ENCODE measurements at regions of chr1 and their contacts with region 1.

Region 1: GRCh38 chr1:36223993-36224536 is at the start of gene THRAP3:
- DNase-seq: peak; percentile 100
- total RNA-seq, gene THRAP3: 86.5 TPM

Region 2: DNA sequence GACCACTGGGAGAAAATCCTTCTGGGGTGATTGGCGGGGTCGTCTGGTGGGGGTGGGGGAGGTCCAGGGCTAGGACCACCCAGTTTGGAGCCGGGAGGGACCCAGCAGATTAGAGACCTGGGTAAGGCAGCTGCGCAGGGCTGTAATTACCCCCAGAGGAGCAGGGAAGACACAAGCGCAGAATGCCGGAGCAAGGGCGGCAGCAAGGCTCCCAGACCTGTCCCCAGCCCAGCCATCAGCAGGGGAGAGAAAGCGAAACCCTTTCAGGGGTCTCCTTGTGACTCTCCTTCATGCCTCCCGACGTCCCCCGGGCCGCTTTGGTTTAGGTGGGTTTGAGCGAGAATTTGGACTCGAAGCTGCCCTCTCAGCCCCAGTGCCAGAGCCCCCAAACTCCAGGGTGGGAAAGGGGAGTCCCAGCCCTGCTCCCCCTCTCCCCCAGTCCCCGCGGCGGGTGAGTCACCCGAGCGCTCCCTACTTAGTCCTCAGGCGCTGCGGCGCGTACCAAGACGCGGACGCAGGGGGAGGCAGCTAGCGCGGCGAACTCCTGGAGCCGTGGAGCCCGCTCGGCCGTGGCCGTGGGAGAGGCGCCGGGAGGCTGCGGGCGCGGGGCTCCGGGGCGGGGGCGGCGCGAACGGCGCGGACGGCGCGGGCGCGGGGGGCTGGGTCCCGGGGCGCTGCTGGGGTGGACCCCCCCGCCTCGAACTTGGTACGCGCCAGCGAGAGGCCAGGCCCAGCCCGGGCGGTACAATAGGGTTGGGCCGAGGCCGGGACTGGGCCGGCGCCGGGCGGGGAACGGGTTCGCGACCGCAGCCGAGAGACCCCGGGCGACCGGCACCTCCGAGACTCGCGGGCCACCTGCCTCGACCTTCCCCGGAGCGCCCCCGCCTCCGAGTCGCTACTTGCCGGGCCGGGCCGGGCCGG is 68.4 kb before region 1 on chr1 and contains the start of gene MAP7D1:
- intact Hi-C with region 1: loop called (anchors 2 kb)
- DNase-seq: peak; percentile 96
- total RNA-seq, gene MAP7D1: 262 TPM

Region 3: DNA sequence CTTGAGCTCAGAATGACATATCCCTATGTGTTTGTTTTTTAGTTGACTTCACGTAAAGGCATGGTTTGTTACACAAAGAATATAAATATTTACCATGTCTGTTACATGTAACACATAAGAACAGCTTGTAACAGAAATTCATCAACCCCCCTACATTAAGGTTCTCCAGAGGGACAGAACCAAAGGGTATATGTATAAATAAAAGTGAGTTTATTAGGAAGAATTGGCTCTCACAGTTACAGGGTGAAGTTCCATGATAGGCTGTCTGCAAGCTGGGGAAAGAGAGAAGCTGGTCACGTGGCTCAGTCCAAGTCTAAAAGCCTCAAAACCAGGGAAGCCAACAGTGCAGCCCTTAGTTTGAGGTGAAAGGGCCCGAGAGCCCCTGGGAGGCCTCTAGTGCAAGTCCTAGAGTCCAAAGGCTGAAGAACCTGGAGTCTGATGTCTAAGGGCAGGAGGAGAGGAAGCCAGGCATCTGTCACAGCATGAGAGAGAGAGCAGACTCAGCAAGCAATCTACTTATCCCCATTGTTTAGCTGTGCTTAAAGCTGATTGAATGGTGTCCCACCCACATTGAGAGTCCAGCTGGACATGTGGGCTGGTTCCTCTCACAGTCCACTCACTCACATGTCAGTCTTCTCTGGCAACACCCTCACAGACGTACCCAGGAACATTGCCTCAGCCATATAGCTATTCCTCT is 16.0 kb after region 1 on chr1:
- intact Hi-C with region 1: loop called (anchors 2 kb)
- DNase-seq: peak; percentile 76

Region 4: DNA sequence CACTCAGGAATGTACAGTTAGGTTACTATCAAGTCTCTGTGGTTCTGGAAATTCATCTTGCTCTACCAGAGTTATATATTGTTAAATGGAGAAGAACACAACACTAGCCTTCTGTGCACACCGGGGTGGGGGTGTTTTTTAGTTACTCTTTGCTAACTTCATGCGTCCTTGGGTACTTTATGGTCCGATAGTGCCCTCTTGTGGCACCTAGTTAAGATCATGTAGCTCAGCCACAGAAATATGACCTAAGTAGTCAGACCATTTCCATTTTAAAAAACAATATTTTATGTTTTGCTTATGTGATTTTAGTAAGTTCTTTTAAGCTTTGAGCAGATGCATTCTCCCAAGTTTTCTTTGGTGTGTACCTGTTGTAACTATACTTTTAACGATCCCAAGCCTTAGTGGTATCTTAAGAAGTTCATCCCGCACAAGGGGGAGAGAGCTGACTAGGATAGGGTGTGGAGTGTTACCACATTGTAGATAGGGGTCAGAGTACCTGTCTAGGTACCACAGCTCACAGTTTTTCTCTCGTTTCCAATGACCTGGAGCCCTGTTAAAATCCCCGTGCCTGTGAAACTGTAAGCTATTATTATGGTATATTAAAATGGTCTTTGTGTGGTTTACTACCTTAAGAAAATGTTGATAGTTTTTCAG is 61.5 kb after region 1 on chr1:
- intact Hi-C with region 1: loop called (anchors 2 kb)
- DNase-seq: no peak

Measured in cardiac septum (tissue), 1 donor.